ENCODE measurements at regions of chr6 and their contacts with region 1.

Region 1: GRCh38 chr6:112180095-112180820 is 74.1 kb downstream of the LAMA4 start:
- DNase-seq: peak; percentile 52
- ATAC-seq: peak; percentile 96
- H3K4me3 ChIP-seq: no peak overlapping the region
- H3K27ac ChIP-seq: no peak overlapping the region; the same call in 1 of the 2 replicates
- H3K4me1 ChIP-seq: no peaks in the 10 kb centered on the region
- H3K27me3 ChIP-seq: no peaks in the 10 kb centered on the region
- CTCF ChIP-seq: peak; percentile 82; the same call in 1 of the 2 replicates

Region 2: DNA sequence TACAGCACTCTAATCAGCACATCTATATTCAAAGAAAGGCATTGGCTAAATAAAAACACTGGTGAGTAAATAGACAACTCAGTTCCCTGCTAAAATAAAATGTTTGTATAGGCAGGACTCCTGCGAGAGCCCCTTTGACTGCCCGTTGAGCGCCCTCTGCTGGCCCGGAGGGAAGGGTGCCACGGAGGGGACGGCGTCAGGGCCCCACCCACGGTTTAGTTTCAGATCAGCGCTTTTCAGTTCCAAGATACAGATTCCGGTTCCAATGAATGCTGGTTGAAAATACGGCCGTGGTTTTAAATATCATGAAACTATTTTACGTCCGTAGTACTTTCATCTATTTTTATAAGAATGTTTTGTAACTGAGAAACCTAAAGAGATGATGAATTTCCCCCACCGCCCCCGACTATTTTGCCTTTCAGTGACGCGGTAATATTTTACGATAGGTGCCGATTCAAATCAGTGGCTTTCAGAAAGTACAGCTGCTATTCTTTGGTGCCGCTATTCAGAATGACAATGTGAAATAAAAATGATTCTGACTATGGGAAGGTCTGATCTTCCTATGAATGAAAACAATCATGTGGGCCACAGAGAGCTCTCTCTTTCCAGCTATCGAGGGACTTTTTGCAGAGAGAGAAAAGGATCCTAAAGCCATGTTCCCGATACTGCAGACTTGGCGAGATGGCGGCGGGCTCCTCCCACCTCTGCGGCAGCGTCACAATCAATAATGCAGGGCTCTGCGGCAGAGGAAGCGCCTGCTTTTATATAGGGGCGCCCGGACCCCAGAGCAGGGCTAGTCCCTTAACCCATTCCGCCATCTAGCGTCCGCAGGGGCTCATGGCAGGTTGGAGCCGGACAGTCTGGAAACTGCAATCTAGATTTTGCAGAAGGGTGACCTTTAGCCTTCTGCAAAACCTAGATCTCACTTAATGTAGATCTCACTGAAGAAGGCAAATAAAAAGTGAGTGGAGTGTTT is 136.9 kb before region 1 on chr6:
- CTCF ChIA-PET with region 1: no interaction called
- POLR2A ChIA-PET with region 1: no interaction called
- in situ Hi-C with region 1: no loop called
- intact Hi-C with region 1: no loop called
- DNase-seq: peak; percentile 72
- ATAC-seq: peak; percentile 95
- H3K4me3 ChIP-seq: peak overlapping the region; percentile 81 to 83
- H3K27ac ChIP-seq: peak overlapping the region; percentile 81
- H3K4me1 ChIP-seq: peaks cover 4% of the 10 kb centered on the region; the same call in 1 of the 2 replicates
- H3K27me3 ChIP-seq: no peaks in the 10 kb centered on the region
- CTCF ChIP-seq: peak; percentile 97

Region 3: GRCh38 chr6:112311950-112312547 is 131.8 kb after region 1 on chr6:
- CTCF ChIA-PET with region 1: interaction called, 19 read pairs
- POLR2A ChIA-PET with region 1: no interaction called
- in situ Hi-C with region 1: no loop called
- intact Hi-C with region 1: loop called (anchors 1 kb)
- DNase-seq: peak; percentile 25
- ATAC-seq: peak; percentile 56; the same call in 1 of the 2 replicates
- H3K4me3 ChIP-seq: no peak overlapping the region
- H3K27ac ChIP-seq: peak overlapping the region; percentile 19; the same call in 1 of the 2 replicates
- H3K4me1 ChIP-seq: no peaks in the 10 kb centered on the region
- H3K27me3 ChIP-seq: no peaks in the 10 kb centered on the region
- CTCF ChIP-seq: peak; percentile 84; the same call in 1 of the 2 replicates

Measured in Panc1 (cell line).